SK-N-SH (cell line): ENCODE measurements at regions of chr1 and their contacts with region 1.

Region 1: DNA sequence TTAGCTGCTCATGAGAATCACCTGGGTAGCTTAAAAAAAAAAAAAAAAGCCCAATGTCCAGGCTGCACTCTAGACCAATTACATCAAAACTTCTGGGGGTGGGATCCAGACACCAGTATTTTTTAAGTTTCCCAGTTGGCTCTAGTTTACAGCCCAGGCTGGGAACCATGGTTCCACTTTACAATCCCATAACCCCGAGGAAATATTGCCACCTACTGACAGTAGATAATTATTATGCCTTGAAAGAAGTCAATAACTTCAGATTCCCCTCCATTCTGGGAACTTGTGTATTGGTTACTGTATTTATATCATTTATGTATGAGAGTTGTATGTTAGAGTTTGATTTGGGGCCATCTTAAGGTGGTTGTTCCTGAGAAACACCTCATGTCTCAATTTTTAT is 100.2 kb downstream of the SPATA46 start:
- DNase-seq: peak; percentile 51
- H3K4me3 ChIP-seq: peak overlapping the region in 1 of 2 experiments; percentile 18; a peak in 1 of 4 replicates
- H3K27ac ChIP-seq: no peak overlapping the region
- H3K4me1 ChIP-seq: peaks cover 0 to 5% of the 10 kb centered on the region in 2 experiments; a peak in 2 of 4 replicates
- H3K27me3 ChIP-seq: peaks cover 10% of the 10 kb centered on the region; the same call in 1 of the 2 replicates
- CTCF ChIP-seq: peak; percentile 57
- EP300 ChIP-seq: no peak
- RAD21 ChIP-seq: peak; percentile 84

Region 2: GRCh38 chr1:162091681-162092524 is 184.6 kb before region 1 on chr1:
- CTCF ChIA-PET with region 1: no interaction called
- POLR2A ChIA-PET with region 1: no interaction called
- DNase-seq: no peak
- H3K4me3 ChIP-seq: no peak overlapping the region
- H3K27ac ChIP-seq: no peak overlapping the region
- H3K4me1 ChIP-seq: no peaks in the 10 kb centered on the region; a peak in 1 of 4 replicates
- H3K27me3 ChIP-seq: no peaks in the 10 kb centered on the region
- CTCF ChIP-seq: no peak
- EP300 ChIP-seq: no peak
- RAD21 ChIP-seq: no peak

Region 3: GRCh38 chr1:162297208-162297607 is 20.7 kb after region 1 on chr1:
- CTCF ChIA-PET with region 1: interaction called, 14 read pairs
- POLR2A ChIA-PET with region 1: no interaction called
- DNase-seq: no peak
- H3K4me3 ChIP-seq: no peak overlapping the region
- H3K27ac ChIP-seq: no peak overlapping the region
- H3K4me1 ChIP-seq: peaks cover 0 to 5% of the 10 kb centered on the region in 2 experiments; a peak in 1 of 4 replicates
- H3K27me3 ChIP-seq: no peaks in the 10 kb centered on the region; the same call in 1 of the 2 replicates
- CTCF ChIP-seq: no peak
- EP300 ChIP-seq: no peak
- RAD21 ChIP-seq: no peak